CD4-positive, alpha-beta T cell (primary cell): ENCODE measurements at regions of chr3 and their contacts with region 1.

Region 1: DNA sequence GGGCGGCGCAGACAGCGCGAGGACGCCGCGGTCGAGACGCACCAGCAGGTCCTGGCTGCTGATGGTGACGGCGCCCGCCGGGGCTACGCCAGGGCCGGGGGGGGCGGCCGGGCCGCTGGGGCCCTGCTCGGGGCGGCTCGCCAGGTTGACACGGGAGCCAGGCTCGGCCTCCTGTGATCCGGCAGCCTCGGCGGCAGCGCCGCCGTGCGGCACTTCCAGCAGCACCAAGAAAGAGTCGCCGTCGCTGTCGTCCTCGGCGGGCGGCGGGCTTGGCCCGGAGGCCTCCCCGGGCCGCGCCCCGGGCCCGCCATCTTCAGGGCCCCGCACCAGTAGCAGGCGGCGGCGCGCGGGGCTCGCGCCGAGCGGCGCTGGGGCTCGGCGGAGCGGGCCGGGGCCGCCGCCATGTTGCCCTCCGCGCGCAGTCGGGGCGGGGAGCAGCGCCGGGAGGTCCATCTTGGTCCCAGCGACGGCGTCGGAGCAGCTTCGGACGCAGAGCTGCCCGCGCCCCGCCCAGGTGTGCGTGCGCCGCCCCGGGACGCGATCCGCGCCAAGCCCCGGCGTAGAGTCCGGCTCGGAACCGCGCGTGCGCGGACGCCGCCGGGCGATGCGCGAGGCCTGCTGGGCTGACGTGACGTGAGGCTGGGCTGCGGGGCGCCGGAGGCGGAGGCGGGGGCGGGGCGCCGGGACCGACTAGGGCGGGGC is at the start of gene ZXDC:
- DNase-seq: peak; percentile 80 to 97 (median 94)
- ATAC-seq: peak; percentile 75
- H3K4me3 ChIP-seq: peak within 1 kb of the TSS; percentile 74
- H3K4me3 Mint-ChIP-seq: peak within 1 kb of the TSS; percentile 95
- H3K27ac ChIP-seq: peak within 1 kb of the TSS; percentile 23 to 77
- H3K27ac Mint-ChIP-seq: peak within 1 kb of the TSS; percentile 94
- H3K4me1 ChIP-seq: peaks cover 41% of the 10 kb centered on the region
- H3K4me1 Mint-ChIP-seq: peaks cover 51% of the 10 kb centered on the region
- H3K27me3 ChIP-seq: no peaks in the 10 kb centered on the region
- H3K27me3 Mint-ChIP-seq: no peaks in the 10 kb centered on the region
- CTCF ChIP-seq: no peak
- total RNA-seq, gene ZXDC: 60.7 to 61.3 TPM

Region 2: DNA sequence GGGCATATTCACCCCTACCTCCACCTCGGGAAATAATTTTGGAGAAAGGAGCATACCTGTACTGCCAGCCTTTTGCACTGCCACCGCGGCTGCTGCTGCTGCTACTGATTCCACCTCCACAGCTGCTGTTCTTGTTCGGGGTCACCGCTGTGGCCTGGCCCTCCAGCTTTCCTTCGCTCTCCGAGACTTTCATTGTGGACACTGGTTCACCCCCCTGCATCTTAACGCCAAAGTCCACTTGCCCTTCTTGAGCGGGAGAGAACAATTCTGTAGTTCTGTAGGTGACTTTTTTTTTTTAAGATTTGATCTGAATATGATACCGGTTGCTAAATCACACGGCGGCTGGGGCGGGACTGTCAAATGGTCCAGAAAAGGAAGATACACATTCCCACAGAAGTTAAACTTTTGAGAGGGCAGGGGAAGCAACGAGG is 881.0 kb before region 1 on chr3:
- CTCF ChIA-PET with region 1: no interaction called
- POLR2A ChIA-PET with region 1: no interaction called
- intact Hi-C with region 1: loop called in 1 of 2 experiments (anchors 5 kb)
- DNase-seq: no peak
- ATAC-seq: no peak
- H3K4me3 ChIP-seq: peak overlapping the region; percentile 92
- H3K4me3 Mint-ChIP-seq: peak overlapping the region; percentile 97
- H3K27ac ChIP-seq: peak overlapping the region; percentile 70 to 80
- H3K27ac Mint-ChIP-seq: peak overlapping the region; percentile 84
- H3K4me1 ChIP-seq: peaks cover 45% of the 10 kb centered on the region
- H3K4me1 Mint-ChIP-seq: peaks cover 46% of the 10 kb centered on the region
- H3K27me3 ChIP-seq: no peaks in the 10 kb centered on the region
- H3K27me3 Mint-ChIP-seq: no peaks in the 10 kb centered on the region
- CTCF ChIP-seq: no peak

Region 3: GRCh38 chr3:125990253-125990970 is 485.2 kb before region 1 on chr3:
- CTCF ChIA-PET with region 1: no interaction called
- POLR2A ChIA-PET with region 1: no interaction called
- intact Hi-C with region 1: loop called in 1 of 2 experiments (anchors 5 kb)
- DNase-seq: peak; percentile 48 to 85 (median 62)
- ATAC-seq: peak; percentile 88
- H3K4me3 ChIP-seq: peak overlapping the region; percentile 91
- H3K4me3 Mint-ChIP-seq: peak overlapping the region; percentile 98
- H3K27ac ChIP-seq: peak overlapping the region; percentile 73 to 87
- H3K27ac Mint-ChIP-seq: peak overlapping the region; percentile 99
- H3K4me1 ChIP-seq: peaks cover 8% of the 10 kb centered on the region
- H3K4me1 Mint-ChIP-seq: peaks cover 53% of the 10 kb centered on the region
- H3K27me3 ChIP-seq: no peaks in the 10 kb centered on the region
- H3K27me3 Mint-ChIP-seq: no peaks in the 10 kb centered on the region
- CTCF ChIP-seq: no peak

Region 4: GRCh38 chr3:126373682-126374601 is 101.6 kb before region 1 on chr3:
- CTCF ChIA-PET with region 1: no interaction called
- POLR2A ChIA-PET with region 1: no interaction called
- intact Hi-C with region 1: no loop called
- DNase-seq: no peak
- ATAC-seq: no peak
- H3K4me3 ChIP-seq: no peak overlapping the region
- H3K4me3 Mint-ChIP-seq: no peak overlapping the region
- H3K27ac ChIP-seq: no peak overlapping the region
- H3K27ac Mint-ChIP-seq: no peak overlapping the region
- H3K4me1 ChIP-seq: no peaks in the 10 kb centered on the region
- H3K4me1 Mint-ChIP-seq: no peaks in the 10 kb centered on the region
- H3K27me3 ChIP-seq: no peaks in the 10 kb centered on the region
- H3K27me3 Mint-ChIP-seq: no peaks in the 10 kb centered on the region
- CTCF ChIP-seq: no peak

Region 5: GRCh38 chr3:126407412-126408044 is 68.0 kb before region 1 on chr3:
- CTCF ChIA-PET with region 1: no interaction called
- POLR2A ChIA-PET with region 1: no interaction called
- intact Hi-C with region 1: no loop called
- DNase-seq: no peak
- ATAC-seq: no peak
- H3K4me3 ChIP-seq: no peak overlapping the region
- H3K4me3 Mint-ChIP-seq: no peak overlapping the region
- H3K27ac ChIP-seq: no peak overlapping the region
- H3K27ac Mint-ChIP-seq: no peak overlapping the region
- H3K4me1 ChIP-seq: no peaks in the 10 kb centered on the region
- H3K4me1 Mint-ChIP-seq: no peaks in the 10 kb centered on the region
- H3K27me3 ChIP-seq: peaks cover 2 to 6% of the 10 kb centered on the region in 2 experiments
- H3K27me3 Mint-ChIP-seq: peaks cover 59% of the 10 kb centered on the region
- CTCF ChIP-seq: no peak

Region 6: GRCh38 chr3:126703512-126704462 is 228.2 kb after region 1 on chr3 and contains the start of gene CHCHD6:
- CTCF ChIA-PET with region 1: no interaction called
- POLR2A ChIA-PET with region 1: no interaction called
- intact Hi-C with region 1: loop called in 1 of 2 experiments (anchors 2 kb)
- DNase-seq: peak; percentile 93 to 98 (median 96)
- ATAC-seq: peak; percentile 94
- H3K4me3 ChIP-seq: peak within 1 kb of the TSS; percentile 81
- H3K4me3 Mint-ChIP-seq: peak within 1 kb of the TSS; percentile 98
- H3K27ac ChIP-seq: no peak within 1 kb of the TSS
- H3K27ac Mint-ChIP-seq: peak within 1 kb of the TSS; percentile 70
- H3K4me1 ChIP-seq: peaks cover 19% of the 10 kb centered on the region
- H3K4me1 Mint-ChIP-seq: peaks cover 31% of the 10 kb centered on the region
- H3K27me3 ChIP-seq: peaks cover 0 to 4% of the 10 kb centered on the region in 2 experiments
- H3K27me3 Mint-ChIP-seq: peaks cover 21% of the 10 kb centered on the region
- CTCF ChIP-seq: peak; percentile 25
- total RNA-seq, gene CHCHD6: 8.7 to 9.3 TPM

Region 7: DNA sequence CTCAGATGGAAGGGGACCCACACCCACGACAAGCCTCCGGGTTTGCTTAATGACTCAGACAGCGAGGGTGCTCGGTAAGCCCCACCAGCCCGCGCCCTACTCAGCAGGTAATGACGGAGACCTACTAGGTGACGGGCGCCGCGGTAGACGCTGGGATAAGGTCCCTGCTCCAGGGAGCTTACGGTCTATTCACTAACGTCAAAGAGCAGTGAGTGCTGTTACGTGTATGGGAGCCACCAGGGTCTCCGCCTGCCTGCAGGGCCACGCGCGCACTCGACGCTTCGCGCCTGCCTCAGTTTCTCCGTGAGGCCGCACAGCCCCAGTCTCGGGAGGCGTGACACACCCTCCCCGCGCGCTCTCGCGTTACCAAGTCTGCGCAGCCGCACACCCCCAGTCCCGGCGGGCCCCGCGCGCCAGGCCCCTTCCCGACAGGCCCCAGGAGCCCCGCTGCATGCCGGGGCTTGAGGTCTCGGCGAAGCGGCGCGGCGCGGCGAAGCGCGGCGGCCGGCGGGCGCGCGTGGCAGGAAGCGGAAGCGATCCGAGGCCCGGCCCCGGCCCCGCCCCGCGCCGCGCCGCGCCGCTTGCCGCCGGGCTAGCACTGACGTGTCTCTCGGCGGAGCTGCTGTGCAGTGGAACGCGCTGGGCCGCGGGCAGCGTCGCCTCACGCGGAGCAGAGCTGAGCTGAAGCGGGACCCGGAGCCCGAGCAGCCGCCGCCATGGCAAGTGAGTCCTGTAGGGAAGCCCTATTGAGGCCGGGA is 1576.5 kb after region 1 on chr3 and contains the start of gene SEC61A1:
- CTCF ChIA-PET with region 1: no interaction called
- POLR2A ChIA-PET with region 1: no interaction called
- intact Hi-C with region 1: loop called in 1 of 2 experiments (anchors 1 kb)
- DNase-seq: peak; percentile 91 to 97 (median 94)
- ATAC-seq: peak; percentile 93
- H3K4me3 ChIP-seq: peak within 1 kb of the TSS; percentile 95
- H3K4me3 Mint-ChIP-seq: peak within 1 kb of the TSS; percentile 99
- H3K27ac ChIP-seq: peak within 1 kb of the TSS; percentile 72 to 73
- H3K27ac Mint-ChIP-seq: peak within 1 kb of the TSS; percentile 88
- H3K4me1 ChIP-seq: peaks cover 37% of the 10 kb centered on the region
- H3K4me1 Mint-ChIP-seq: peaks cover 47% of the 10 kb centered on the region
- H3K27me3 ChIP-seq: no peaks in the 10 kb centered on the region
- H3K27me3 Mint-ChIP-seq: no peaks in the 10 kb centered on the region
- CTCF ChIP-seq: no peak
- total RNA-seq, gene SEC61A1: 127 to 139 TPM